ENCODE measurements at regions of chr18 and their contacts with region 1.

Region 1: DNA sequence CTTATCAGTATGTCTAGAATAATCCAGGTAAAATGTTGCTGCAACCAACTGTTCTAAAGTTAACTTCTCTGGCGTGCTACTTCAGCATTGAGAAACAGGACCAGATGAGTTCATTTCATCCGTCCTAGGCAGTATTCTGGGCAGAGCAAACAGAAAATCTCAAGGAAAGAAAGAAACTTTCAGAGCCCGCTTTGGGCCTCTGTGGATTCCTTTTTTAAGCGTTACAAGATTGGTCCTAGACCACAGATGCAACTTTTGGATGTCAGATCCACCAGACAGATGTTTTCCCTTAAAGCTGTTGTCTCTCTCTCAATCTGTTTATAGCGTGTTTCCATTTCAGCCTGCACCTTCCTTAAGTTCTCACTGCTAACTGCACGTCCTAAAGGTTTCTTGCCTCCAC is 75.0 kb downstream of the BCL2 start:
- DNase-seq: no peak
- ATAC-seq: peak in 3 of 4 donors; percentile 29 to 73 (median 63)
- H3K4me3 ChIP-seq: no peak overlapping the region
- H3K27ac ChIP-seq: peak overlapping the region; percentile 18
- H3K4me1 ChIP-seq: peaks cover 45% of the 10 kb centered on the region
- H3K27me3 ChIP-seq: no peaks in the 10 kb centered on the region
- CTCF ChIP-seq: no peak

Region 2: GRCh38 chr18:63177919-63178821 is 66.4 kb before region 1 on chr18:
- intact Hi-C with region 1: no loop called
- DNase-seq: peak; percentile 86 to 94
- ATAC-seq: peak; percentile 59 to 78 (median 66)
- H3K4me3 ChIP-seq: peak overlapping the region; percentile 49
- H3K27ac ChIP-seq: peak overlapping the region; percentile 65
- H3K4me1 ChIP-seq: peaks cover 38% of the 10 kb centered on the region
- H3K27me3 ChIP-seq: no peaks in the 10 kb centered on the region
- CTCF ChIP-seq: no peak

Region 3: DNA sequence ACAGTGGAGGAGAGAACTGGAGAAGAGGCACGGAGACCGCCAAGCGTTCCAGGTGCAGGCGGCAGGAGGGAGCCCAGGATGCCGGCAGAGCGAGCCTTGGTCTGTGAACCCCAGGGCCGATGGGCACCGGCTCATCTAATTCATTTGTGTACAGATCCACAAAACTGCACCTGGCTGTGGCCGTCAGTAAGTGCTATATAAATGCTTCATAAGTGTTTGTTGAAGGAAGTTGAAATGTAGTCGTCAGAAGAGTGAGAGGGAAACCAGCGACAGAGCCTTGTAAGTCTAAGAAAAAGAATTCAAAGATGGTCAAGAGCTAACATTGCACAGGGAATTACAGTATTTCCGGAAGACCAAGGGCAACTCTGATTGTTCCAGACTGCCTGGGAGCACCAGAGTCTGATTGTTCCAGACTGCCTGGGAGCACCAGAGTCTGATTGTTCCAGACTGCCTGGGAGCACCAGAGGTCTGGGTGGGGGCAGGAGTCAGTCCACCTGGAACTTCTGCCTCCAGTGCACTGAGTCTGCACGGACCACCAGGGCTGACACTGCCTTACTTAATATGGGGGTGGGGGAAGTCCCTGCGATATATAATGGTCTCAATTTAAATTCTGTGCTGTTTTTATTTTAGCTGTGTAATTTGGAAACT is 37.3 kb before region 1 on chr18:
- intact Hi-C with region 1: loop called in 1 of 2 experiments (anchors 5 kb)
- DNase-seq: no peak
- ATAC-seq: peak in 3 of 4 donors; percentile 36 to 46 (median 38)
- H3K4me3 ChIP-seq: peak overlapping the region; percentile 18
- H3K27ac ChIP-seq: no peak overlapping the region
- H3K4me1 ChIP-seq: peaks cover 35% of the 10 kb centered on the region
- H3K27me3 ChIP-seq: no peaks in the 10 kb centered on the region
- CTCF ChIP-seq: no peak